Calu3 (cell line): ENCODE measurements at regions of chr10 and their contacts with region 1.

Region 1: GRCh38 chr10:95693668-95694534 is at the start of gene TCTN3:
- DNase-seq: peak; percentile 94
- H3K4me3 Mint-ChIP-seq: peak within 1 kb of the TSS; percentile 95
- H3K27ac Mint-ChIP-seq: peak within 1 kb of the TSS; percentile 94
- H3K4me1 Mint-ChIP-seq: peaks cover 10% of the 10 kb centered on the region
- H3K27me3 Mint-ChIP-seq: no peaks in the 10 kb centered on the region
- CTCF ChIP-seq: peak; percentile 89
- total RNA-seq, gene TCTN3: 23.5 and 26.1 TPM in 2 replicates

Region 2: DNA sequence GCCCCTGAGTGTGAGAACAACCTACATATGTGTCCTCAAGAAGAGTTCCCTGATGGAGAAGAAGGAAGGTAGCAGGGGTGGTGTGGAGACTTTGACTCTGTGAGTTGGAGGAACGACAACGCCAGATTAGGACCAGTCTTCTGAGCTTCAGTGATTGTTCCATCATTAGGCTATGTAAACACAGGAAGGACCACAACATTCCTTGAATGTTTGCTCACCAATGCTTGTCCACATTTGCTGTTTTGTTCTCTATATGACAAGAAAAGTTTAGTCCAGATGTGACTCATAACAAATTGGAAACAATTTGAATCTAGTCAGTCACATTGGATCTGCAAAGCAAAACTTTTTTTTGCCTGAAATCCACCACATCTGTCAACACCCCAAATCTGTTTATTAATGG is 124.8 kb after region 1 on chr10:
- CTCF ChIA-PET with region 1: interaction called, 12 read pairs
- intact Hi-C with region 1: no loop called
- DNase-seq: no peak
- H3K4me3 Mint-ChIP-seq: no peak overlapping the region
- H3K27ac Mint-ChIP-seq: no peak overlapping the region
- H3K4me1 Mint-ChIP-seq: peaks cover 37% of the 10 kb centered on the region
- H3K27me3 Mint-ChIP-seq: no peaks in the 10 kb centered on the region
- CTCF ChIP-seq: no peak

Region 3: DNA sequence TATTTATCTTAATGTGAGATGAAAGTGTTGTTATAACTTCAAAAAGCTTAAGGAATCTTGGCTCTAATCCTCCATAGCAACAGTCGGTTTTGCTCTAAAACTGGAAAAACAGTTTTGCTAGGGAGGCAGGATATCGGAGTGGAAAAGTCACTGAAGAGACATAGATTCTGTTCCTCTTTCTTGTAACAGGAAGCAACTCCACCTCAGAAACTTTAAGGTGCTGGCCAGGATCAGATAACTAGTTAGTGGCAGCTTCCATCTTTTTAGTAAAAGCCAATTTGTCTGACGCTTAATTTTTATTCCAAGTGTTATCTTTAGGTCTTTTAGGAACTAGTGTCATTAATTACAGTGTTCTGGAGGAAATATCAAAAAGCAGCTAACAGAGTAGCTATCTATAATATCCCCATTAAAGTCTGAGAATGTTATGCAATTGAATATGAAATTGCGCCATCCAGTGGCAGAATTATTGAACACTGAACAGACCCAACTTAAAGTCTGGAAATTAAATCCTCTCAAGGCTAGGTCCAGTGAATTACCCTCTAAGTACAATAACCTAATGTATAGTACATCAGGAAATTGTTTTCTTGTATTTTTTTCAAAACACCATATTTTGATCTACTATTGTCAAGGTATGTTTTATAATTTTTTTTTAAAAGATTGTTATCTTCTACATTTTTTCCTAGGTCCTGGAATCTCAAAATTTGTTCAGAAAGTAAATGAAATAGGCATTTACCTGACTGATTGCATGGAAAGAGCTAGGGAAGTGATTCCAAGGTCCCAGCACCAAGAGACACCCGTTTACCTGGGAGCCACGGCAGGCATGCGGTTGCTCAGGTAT is 148.0 kb after region 1 on chr10:
- CTCF ChIA-PET with region 1: interaction called, 68 read pairs
- intact Hi-C with region 1: loop called (anchors 1 kb)
- DNase-seq: peak; percentile 51
- H3K4me3 Mint-ChIP-seq: no peak overlapping the region
- H3K27ac Mint-ChIP-seq: no peak overlapping the region
- H3K4me1 Mint-ChIP-seq: peaks cover 16% of the 10 kb centered on the region
- H3K27me3 Mint-ChIP-seq: no peaks in the 10 kb centered on the region
- CTCF ChIP-seq: peak; percentile 50

Region 4: GRCh38 chr10:95864906-95865813 is 171.3 kb after region 1 on chr10:
- CTCF ChIA-PET with region 1: interaction called, 36 read pairs
- intact Hi-C with region 1: no loop called
- DNase-seq: peak; percentile 50
- H3K4me3 Mint-ChIP-seq: no peak overlapping the region
- H3K27ac Mint-ChIP-seq: no peak overlapping the region
- H3K4me1 Mint-ChIP-seq: no peaks in the 10 kb centered on the region
- H3K27me3 Mint-ChIP-seq: no peaks in the 10 kb centered on the region
- CTCF ChIP-seq: peak; percentile 35